Transverse colon (tissue), 4 donors: ENCODE measurements at regions of chr11 and their contacts with region 1.

Region 1: DNA sequence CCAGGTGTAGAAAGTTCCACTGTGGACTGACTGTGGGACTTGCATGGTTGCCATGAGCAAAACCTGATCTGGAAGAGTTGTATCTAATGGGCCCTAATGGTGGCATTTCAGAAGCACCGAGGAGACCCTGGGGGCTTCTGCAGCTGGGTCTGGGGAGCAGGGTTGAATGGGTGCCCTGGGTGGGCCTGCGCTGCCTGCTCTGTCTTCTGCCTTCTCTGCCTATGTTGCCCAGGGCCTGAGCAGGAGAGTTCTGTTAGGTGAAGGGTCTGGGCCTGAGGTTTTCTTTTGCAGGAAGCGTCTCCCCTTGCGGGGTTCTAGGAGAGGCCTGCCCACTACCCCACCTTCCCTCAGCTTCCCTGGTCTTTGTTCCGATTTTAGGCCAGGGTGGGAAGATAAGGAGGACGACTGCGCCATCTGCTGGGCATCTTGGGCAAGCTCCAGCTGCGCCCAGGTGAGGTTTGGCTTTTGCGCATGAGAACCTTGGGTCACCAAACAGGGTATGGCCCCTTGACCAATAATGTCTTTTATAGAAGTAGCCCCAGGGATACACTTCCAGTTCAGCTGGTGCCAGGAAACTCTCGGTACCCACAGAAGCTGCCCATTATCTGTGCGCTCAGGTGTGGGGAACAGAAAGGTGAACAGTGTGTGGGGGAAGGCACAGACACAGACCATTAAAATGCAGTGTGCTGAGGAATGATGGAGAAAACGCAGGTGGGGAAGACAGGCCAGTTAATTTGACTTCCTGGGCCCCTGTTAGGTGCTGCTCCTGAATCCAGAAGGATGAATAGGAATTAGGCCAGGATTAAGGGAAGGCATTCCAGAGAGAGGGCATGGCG is 23.2 kb downstream of the COMMD9 start:
- DNase-seq: peak; percentile 46
- H3K4me3 ChIP-seq: no peak overlapping the region
- H3K27ac ChIP-seq: no peak overlapping the region
- H3K4me1 ChIP-seq: no peaks in the 10 kb centered on the region
- H3K27me3 ChIP-seq: peaks cover 3% of the 10 kb centered on the region
- CTCF ChIP-seq: peak; percentile 72 to 83 (median 77)
- EP300 ChIP-seq: no peak
- POLR2A ChIP-seq: no peak

Region 2: GRCh38 chr11:35800970-35801953 is 464.7 kb before region 1 on chr11:
- in situ Hi-C with region 1: loop called in 2 of 4 experiments (anchors 25 kb)
- intact Hi-C with region 1: no loop called
- DNase-seq: no peak
- H3K4me3 ChIP-seq: no peak overlapping the region
- H3K27ac ChIP-seq: no peak overlapping the region
- H3K4me1 ChIP-seq: no peaks in the 10 kb centered on the region
- H3K27me3 ChIP-seq: no peaks in the 10 kb centered on the region
- CTCF ChIP-seq: no peak
- EP300 ChIP-seq: no peak
- POLR2A ChIP-seq: no peak

Region 3: DNA sequence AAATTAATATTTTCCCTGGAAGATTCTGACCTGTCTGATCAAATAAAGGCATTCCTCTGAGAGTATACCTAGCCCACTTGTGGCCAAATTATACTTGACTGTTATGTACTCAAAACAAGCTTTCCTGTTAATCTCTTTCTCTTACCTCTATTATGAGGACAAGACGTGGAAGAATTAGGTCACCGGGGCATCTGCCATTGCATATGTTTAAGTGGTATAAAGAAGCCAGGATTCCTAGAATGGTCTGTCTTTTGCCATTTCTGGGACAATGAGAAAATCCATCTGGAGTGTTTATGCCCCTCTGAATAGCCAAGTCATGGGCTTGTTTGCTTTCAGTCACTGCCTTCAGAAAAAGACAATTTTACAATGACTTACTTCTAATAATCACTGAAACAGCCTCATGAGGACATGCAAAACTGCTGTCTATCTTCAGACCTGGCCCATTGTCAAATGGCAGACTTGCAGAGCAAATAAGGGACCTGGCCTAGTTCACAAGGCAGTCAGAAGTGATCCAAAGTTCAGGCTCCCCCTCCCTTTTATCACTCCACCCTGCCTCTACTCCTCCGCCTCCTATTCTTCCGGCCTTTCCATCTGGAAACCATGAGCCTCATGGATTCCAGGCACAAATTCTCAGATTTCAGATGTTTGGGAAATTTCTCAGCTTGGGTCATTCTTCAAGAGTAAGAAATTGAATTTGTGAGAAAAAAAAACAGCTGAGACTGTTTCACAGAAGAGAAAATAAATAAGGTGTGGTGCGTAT is 450.3 kb before region 1 on chr11:
- in situ Hi-C with region 1: loop called in 3 of 4 experiments (anchors 10 to 25 kb)
- intact Hi-C with region 1: loop called (anchors 10 kb)
- DNase-seq: no peak
- H3K4me3 ChIP-seq: no peak overlapping the region
- H3K27ac ChIP-seq: no peak overlapping the region
- H3K4me1 ChIP-seq: no peaks in the 10 kb centered on the region
- H3K27me3 ChIP-seq: no peaks in the 10 kb centered on the region
- CTCF ChIP-seq: no peak
- EP300 ChIP-seq: no peak
- POLR2A ChIP-seq: no peak

Region 4: GRCh38 chr11:36041988-36042611 is 223.9 kb before region 1 on chr11:
- in situ Hi-C with region 1: loop called in 1 of 4 experiments (anchors 25 kb)
- intact Hi-C with region 1: no loop called
- DNase-seq: no peak
- H3K4me3 ChIP-seq: no peak overlapping the region
- H3K27ac ChIP-seq: no peak overlapping the region
- H3K4me1 ChIP-seq: no peaks in the 10 kb centered on the region
- H3K27me3 ChIP-seq: no peaks in the 10 kb centered on the region
- CTCF ChIP-seq: peak in 3 of 5 experiments; percentile 20 to 31 (median 26)
- EP300 ChIP-seq: no peak
- POLR2A ChIP-seq: no peak

Region 5: GRCh38 chr11:37465221-37465620 is 1199.2 kb after region 1 on chr11:
- in situ Hi-C with region 1: no loop called
- intact Hi-C with region 1: loop called (anchors 10 kb)
- DNase-seq: no peak
- H3K4me3 ChIP-seq: no peak overlapping the region
- H3K27ac ChIP-seq: no peak overlapping the region
- H3K4me1 ChIP-seq: no peaks in the 10 kb centered on the region
- H3K27me3 ChIP-seq: no peaks in the 10 kb centered on the region
- CTCF ChIP-seq: no peak
- EP300 ChIP-seq: no peak
- POLR2A ChIP-seq: no peak